Caco-2 (cell line): ENCODE measurements at regions of chr1 and their contacts with region 1.

Region 1: DNA sequence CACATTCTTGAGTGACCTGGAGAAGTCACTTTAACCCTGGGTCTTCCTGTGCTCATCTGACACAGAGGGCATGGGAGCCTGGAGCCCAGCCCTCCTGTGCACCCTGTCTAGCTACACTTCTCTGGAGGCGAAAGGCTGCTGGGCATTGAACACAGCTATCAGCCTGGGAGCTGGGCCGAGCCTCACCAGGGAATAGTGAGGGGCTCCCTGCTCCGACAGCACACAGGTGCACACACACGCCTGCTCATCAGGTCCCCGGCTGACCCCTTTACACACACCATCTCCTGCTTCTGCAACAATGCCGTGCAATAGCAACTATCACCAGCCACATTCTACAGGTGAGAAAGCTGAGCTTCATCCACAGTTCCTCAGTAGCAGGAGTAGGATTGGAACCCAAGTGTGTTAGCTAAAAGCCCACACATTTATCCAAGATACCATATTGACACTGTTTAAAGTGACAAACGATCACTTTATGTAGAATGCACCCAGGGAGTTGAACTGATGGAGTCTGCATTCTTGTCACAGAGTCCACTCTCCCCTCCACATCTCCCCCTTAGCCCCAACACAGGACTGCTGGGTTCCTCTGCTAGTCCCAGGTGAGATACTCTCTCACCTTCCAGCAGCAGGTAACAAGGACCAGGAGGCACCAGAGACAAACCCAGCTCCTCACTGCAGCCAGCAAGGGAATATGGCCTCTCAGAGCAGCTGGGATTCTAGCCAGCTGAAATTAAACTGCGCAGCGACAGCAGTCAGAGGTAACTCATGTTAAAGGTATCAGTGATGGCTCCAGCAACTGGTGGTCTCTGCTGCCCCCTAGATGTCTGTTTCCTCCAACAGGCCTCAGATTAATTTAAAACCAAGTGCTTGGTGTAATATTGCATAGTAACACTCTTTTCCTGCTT is 18.3 kb upstream of the CAPN8 start:
- DNase-seq: peak; percentile 71 to 79
- H3K4me3 ChIP-seq: no peak overlapping the region
- H3K4me3 Mint-ChIP-seq: no peak overlapping the region
- H3K27ac Mint-ChIP-seq: no peak overlapping the region
- H3K4me1 ChIP-seq: no peaks in the 10 kb centered on the region
- H3K4me1 Mint-ChIP-seq: no peaks in the 10 kb centered on the region
- H3K27me3 ChIP-seq: no peaks in the 10 kb centered on the region
- H3K27me3 Mint-ChIP-seq: peaks cover 5% of the 10 kb centered on the region
- CTCF ChIP-seq: peak; percentile 82 to 83

Region 2: DNA sequence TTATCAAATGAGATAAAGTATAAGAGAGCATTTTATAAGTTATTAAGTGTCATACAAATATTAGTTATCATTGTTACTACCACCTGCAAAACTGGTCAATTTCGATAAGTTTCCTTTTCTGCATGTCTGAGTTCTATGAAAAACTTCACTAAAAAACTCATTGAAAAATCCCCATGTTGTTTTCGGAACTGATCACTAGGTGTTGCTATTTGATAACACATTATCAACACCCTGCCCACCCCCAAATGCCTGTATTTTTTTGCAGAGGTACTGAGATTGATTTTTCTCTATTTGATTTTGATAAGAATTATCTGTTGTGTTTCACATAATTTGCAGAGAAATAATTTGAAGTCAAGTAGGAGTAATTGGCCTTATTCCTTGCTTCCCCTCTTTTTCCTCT is 891.1 kb before region 1 on chr1:
- CTCF ChIA-PET with region 1: no interaction called
- POLR2A ChIA-PET with region 1: no interaction called
- intact Hi-C with region 1: loop called (anchors 2 kb)
- DNase-seq: peak in 1 of 2 experiments; percentile 19
- H3K4me3 ChIP-seq: no peak overlapping the region
- H3K4me3 Mint-ChIP-seq: no peak overlapping the region
- H3K27ac Mint-ChIP-seq: no peak overlapping the region
- H3K4me1 ChIP-seq: 0 out of 2 replicates have a peak, but pooled peaks cover 4% of the 10 kb centered on the region
- H3K4me1 Mint-ChIP-seq: peaks cover 20% of the 10 kb centered on the region
- H3K27me3 ChIP-seq: no peaks in the 10 kb centered on the region
- H3K27me3 Mint-ChIP-seq: no peaks in the 10 kb centered on the region
- CTCF ChIP-seq: peak; percentile 52 to 62

Region 3: DNA sequence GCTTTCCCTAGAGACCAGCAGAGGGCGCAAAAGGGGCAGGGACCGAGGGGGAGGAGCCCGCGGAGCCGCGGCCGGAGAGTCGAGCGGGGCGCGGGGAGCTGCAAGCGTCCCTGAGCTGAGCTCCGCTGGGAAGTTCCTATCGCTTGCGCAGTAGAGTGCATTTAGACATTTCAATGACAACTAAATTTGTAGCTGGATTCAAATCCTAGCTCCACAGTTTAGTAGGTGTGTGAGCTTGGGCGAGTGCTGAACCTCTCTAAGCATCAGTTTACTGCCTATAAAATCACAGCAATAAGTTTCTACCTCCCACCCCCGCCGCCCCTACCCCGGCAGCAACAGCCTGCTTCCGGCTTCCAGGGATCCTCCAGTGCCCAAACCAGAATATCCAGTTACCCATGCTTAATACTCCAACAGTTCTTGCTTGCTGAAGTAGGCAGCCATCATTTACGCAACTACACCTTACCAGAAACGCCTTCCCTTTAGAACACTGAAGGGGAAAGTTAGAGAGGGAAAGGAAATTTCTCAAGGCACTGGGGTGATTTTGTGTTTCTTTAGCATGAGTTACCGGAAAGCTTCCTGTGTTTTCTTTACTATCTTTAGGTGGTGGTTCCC is 549.9 kb before region 1 on chr1:
- CTCF ChIA-PET with region 1: interaction called, 31 read pairs
- POLR2A ChIA-PET with region 1: no interaction called
- intact Hi-C with region 1: loop called (anchors 1 kb)
- DNase-seq: peak; percentile 86 to 91
- H3K4me3 ChIP-seq: peak overlapping the region; percentile 33
- H3K4me3 Mint-ChIP-seq: peak overlapping the region; percentile 77
- H3K27ac Mint-ChIP-seq: peak overlapping the region; percentile 77
- H3K4me1 ChIP-seq: peaks cover 25% of the 10 kb centered on the region; the same call in 1 of the 2 replicates
- H3K4me1 Mint-ChIP-seq: peaks cover 15% of the 10 kb centered on the region
- H3K27me3 ChIP-seq: no peaks in the 10 kb centered on the region
- H3K27me3 Mint-ChIP-seq: no peaks in the 10 kb centered on the region
- CTCF ChIP-seq: peak; percentile 90 to 96

Region 4: GRCh38 chr1:223341121-223341520 is 342.7 kb before region 1 on chr1:
- CTCF ChIA-PET with region 1: no interaction called
- POLR2A ChIA-PET with region 1: no interaction called
- intact Hi-C with region 1: loop called (anchors 10 kb)
- DNase-seq: no peak
- H3K4me3 ChIP-seq: no peak overlapping the region
- H3K4me3 Mint-ChIP-seq: no peak overlapping the region
- H3K27ac Mint-ChIP-seq: no peak overlapping the region
- H3K4me1 ChIP-seq: no peaks in the 10 kb centered on the region
- H3K4me1 Mint-ChIP-seq: peaks cover 6% of the 10 kb centered on the region
- H3K27me3 ChIP-seq: no peaks in the 10 kb centered on the region
- H3K27me3 Mint-ChIP-seq: no peaks in the 10 kb centered on the region
- CTCF ChIP-seq: no peak

Region 5: DNA sequence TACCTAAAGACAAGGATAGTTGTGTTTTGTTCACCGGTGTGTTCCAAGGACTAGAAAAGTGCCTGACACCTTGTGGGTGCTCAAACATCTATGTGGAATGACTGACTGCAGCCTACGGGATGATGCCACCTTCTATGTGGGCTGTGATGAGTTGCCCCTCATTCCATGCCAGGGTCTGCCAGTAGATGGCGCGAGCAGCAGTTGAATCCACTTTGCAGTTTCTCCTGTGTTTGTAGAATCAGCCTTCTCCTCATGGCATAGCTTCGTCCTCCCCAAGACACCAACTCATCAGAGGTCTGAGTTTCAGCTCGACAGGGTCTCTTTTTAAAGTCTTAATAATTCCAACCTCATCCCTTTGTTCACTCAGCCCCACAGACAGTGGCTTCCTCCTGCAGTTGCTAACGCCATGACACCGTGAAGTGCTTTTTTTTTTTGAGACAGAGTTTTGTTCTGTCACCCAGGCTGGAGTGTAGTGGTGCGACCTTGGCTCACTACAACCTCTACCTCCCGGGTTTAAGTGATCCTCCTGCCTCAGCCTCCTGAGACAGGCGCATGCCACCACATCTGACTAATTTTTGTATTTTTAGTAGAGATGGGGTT is 152.0 kb before region 1 on chr1:
- CTCF ChIA-PET with region 1: no interaction called
- POLR2A ChIA-PET with region 1: no interaction called
- intact Hi-C with region 1: loop called (anchors 1 kb)
- DNase-seq: peak; percentile 62 to 66
- H3K4me3 ChIP-seq: no peak overlapping the region
- H3K4me3 Mint-ChIP-seq: no peak overlapping the region
- H3K27ac Mint-ChIP-seq: no peak overlapping the region
- H3K4me1 ChIP-seq: no peaks in the 10 kb centered on the region
- H3K4me1 Mint-ChIP-seq: no peaks in the 10 kb centered on the region
- H3K27me3 ChIP-seq: no peaks in the 10 kb centered on the region
- H3K27me3 Mint-ChIP-seq: no peaks in the 10 kb centered on the region
- CTCF ChIP-seq: peak; percentile 63 to 76

Region 6: DNA sequence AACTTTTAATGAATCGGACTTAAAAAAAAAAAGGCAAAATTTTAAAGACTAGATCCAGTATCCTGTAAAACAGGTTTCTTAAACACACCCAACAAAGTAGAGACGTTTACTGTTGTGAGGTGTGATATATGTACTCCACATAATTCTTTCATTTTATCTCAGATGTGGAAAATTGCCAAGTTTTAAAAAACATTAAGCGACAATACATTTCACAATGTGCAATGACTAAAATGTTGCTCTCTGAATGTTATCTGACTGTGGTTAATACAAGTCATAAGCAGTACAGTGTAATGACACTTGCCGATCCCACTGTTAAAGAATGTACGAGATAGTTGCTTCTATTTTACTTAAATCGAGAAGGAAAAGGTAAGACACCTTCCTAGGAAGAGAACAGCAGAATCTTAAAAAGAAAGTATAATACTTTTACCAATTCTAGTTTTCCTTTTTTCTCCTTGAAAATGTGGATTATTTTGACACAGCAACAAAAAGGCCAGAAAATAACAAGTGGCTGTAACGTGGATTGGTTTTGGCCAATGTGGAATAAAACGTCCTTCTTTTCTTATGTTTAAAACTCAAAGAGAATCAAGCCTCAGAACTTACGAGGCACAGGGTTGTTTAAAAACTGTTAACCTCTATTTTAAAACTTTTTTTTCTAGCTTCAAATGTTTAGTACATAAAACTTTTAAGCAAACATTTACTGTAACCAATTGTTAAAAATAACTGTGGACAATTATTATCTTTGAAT is 110.5 kb after region 1 on chr1:
- CTCF ChIA-PET with region 1: no interaction called
- POLR2A ChIA-PET with region 1: no interaction called
- intact Hi-C with region 1: no loop called
- DNase-seq: no peak
- H3K4me3 ChIP-seq: no peak overlapping the region
- H3K4me3 Mint-ChIP-seq: no peak overlapping the region
- H3K27ac Mint-ChIP-seq: no peak overlapping the region
- H3K4me1 ChIP-seq: peaks cover 18% of the 10 kb centered on the region
- H3K4me1 Mint-ChIP-seq: peaks cover 6% of the 10 kb centered on the region
- H3K27me3 ChIP-seq: no peaks in the 10 kb centered on the region
- H3K27me3 Mint-ChIP-seq: no peaks in the 10 kb centered on the region
- CTCF ChIP-seq: no peak